GM10248 (cell line): ENCODE measurements at regions of chr7 and their contacts with region 1.

Region 1: GRCh38 chr7:157224627-157225026 is 85.9 kb downstream of the UBE3C start:
- DNase-seq: no peak
- CTCF ChIP-seq: no peak

Region 2: GRCh38 chr7:156816943-156817572 is 407.6 kb before region 1 on chr7:
- CTCF ChIA-PET with region 1: no interaction called
- POLR2A ChIA-PET with region 1: no interaction called
- DNase-seq: peak; percentile 22
- CTCF ChIP-seq: peak; percentile 25

Region 3: DNA sequence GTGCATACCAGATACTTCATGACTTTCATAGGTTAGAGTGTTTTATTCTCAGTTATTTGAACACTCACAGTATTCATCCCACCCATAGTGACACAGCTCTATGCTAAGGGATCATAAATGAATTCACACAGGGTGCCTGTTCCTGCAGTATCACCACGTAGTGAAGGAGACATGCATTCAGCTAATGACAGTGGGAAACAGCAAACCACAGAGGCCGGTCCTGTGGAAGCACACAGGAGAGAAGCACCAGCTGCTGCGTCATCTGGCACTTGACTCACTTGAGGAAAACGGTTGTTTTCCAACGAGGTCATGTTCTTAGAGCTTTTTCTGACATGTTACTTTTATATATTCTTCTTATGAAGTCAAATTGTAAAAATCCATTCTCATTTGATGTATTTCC is 12.9 kb before region 1 on chr7:
- CTCF ChIA-PET with region 1: interaction called, 14 read pairs
- POLR2A ChIA-PET with region 1: no interaction called
- DNase-seq: no peak
- CTCF ChIP-seq: no peak

Region 4: DNA sequence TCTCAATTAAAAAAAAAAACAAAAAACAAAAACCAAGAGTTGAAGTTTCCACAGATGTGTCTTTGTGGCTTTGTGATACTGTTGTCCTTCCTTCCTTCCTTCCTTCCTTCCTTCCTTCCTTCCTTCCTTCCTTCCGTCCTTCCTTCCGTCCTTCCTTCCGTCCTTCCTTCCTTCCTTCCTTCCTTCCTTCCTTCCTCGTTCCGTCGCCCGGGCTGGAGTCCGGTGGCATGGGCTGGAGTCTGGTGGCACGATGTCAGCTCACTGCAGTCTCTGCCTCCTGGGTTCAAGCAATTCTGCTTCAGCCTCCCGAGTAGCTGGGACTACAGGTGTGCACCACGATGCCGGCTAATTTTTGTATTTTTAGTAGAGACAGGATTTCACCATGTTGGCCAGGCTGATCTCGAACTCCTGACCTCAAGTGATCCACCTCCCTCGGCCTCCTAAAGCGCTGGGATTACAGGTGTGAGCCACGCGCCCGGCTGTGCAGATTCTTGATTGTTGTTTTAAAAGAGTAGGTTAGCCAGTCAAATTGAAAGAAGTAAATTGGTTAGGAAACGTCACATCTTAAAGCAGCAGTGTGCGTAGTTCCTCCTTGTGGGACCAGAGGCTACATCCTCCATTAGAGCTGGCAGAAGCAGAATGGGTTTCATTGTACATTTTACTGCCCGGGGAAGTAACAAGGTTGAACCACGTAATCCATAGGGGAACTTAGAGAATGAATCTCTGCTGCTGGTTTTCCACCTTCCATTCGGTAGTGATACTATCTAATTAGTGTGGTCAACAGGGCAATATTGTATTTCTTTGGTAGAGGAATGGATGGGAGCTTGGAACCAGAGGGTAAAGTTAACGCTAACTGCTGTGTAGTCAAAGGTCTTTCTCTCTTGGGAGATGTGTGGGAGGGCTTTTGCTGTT is 132.8 kb after region 1 on chr7:
- CTCF ChIA-PET with region 1: no interaction called
- POLR2A ChIA-PET with region 1: no interaction called
- DNase-seq: peak; percentile 81
- CTCF ChIP-seq: no peak